H1 (cell line): ENCODE measurements at regions of chr6 and their contacts with region 1.

Region 1: DNA sequence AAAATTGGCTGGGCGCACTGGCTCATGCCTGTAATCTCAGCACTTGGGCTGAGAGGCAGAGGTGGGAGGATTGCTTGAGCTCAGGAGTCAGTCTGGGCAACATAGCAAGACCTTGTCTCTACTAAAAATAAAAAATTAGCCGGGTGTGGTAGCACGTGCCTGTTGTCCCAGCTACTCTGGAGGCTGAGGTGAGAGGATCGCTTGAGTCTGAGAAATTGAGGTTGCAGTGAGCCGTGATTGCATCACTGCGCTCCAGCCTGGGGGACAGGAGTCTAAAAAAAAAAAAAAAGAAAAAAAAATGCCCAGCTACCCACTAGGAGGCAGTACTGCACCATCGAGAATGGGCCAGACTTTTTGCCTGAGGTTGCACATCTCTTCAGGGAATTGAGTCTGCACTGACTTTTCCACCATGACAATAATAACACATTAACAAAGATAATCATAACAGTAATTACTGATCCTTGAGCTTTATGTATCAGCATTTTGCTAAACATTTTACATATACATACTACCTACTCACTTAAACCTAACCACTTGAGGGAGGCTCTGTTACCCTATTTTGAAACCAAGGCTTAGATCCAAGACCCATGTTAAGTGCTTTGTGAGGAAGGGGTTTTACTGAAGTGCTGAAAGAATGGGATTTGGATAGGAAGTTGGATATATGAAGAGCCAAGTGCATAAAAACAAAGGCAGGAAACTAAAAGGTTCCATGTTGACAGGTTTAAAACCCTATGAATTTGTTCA is 21.0 kb downstream of the SRSF3 start:
- DNase-seq: no peak
- H3K4me3 ChIP-seq: no peak overlapping the region
- H3K27ac ChIP-seq: no peak overlapping the region
- H3K4me1 ChIP-seq: peaks cover 0 to 2% (median 0%) of the 10 kb centered on the region in 4 experiments; a peak in 1 of 7 replicates
- H3K27me3 ChIP-seq: no peaks in the 10 kb centered on the region
- CTCF ChIP-seq: peak; percentile 47 to 77 (median 75)
- EP300 ChIP-seq: no peak
- POLR2A ChIP-seq: no peak
- RAD21 ChIP-seq: peak; percentile 85 to 86

Region 2: GRCh38 chr6:36285187-36285671 is 330.0 kb before region 1 on chr6:
- CTCF ChIA-PET with region 1: no interaction called
- POLR2A ChIA-PET with region 1: no interaction called
- DNase-seq: peak; percentile 19 to 79
- H3K4me3 ChIP-seq: no peak overlapping the region
- H3K27ac ChIP-seq: no peak overlapping the region
- H3K4me1 ChIP-seq: peaks cover 0 to 7% (median 3%) of the 10 kb centered on the region in 4 experiments; a peak in 5 of 7 replicates
- H3K27me3 ChIP-seq: 0 out of 7 replicates have a peak, but pooled peaks cover 0 to 3% (median 0%) of the 10 kb centered on the region in 4 experiments
- CTCF ChIP-seq: peak; percentile 37 to 42 (median 39)
- EP300 ChIP-seq: no peak
- POLR2A ChIP-seq: no peak
- RAD21 ChIP-seq: peak; percentile 50 to 66

Region 3: DNA sequence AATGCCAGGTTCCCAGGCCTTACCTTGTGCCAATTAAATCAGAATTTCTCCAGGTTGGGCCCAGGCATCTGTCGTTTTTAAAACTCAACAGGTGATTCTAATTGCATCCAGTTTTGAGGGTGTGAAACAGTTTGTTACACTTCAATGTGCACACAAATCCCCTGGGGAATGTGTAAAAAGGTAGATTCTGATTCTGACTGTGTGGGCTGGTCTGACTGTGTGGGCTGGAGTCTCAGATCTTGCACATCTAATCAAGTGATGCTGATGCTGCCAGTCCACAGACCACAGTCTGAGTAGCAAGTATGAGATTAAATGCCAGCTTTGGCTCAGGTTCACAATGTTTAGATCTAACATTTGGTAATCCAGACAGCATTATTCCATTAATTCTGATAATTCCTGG is 215.2 kb before region 1 on chr6:
- CTCF ChIA-PET with region 1: no interaction called
- POLR2A ChIA-PET with region 1: no interaction called
- DNase-seq: no peak
- H3K4me3 ChIP-seq: no peak overlapping the region
- H3K27ac ChIP-seq: no peak overlapping the region
- H3K4me1 ChIP-seq: no peaks in the 10 kb centered on the region
- H3K27me3 ChIP-seq: no peaks in the 10 kb centered on the region
- CTCF ChIP-seq: no peak
- EP300 ChIP-seq: no peak
- POLR2A ChIP-seq: no peak
- RAD21 ChIP-seq: no peak

Region 4: GRCh38 chr6:36633915-36634314 is 18.7 kb after region 1 on chr6:
- CTCF ChIA-PET with region 1: interaction called, 13 read pairs
- POLR2A ChIA-PET with region 1: interaction called, 5 read pairs
- DNase-seq: no peak
- H3K4me3 ChIP-seq: no peak overlapping the region
- H3K27ac ChIP-seq: no peak overlapping the region
- H3K4me1 ChIP-seq: peaks cover 0 to 4% (median 1%) of the 10 kb centered on the region in 4 experiments; a peak in 2 of 7 replicates
- H3K27me3 ChIP-seq: no peaks in the 10 kb centered on the region
- CTCF ChIP-seq: no peak
- EP300 ChIP-seq: no peak
- POLR2A ChIP-seq: no peak
- RAD21 ChIP-seq: no peak

Region 5: GRCh38 chr6:36724514-36725390 is 109.6 kb after region 1 on chr6:
- CTCF ChIA-PET with region 1: interaction called, 35 read pairs
- POLR2A ChIA-PET with region 1: interaction called, 7 read pairs
- DNase-seq: peak; percentile 49 to 86
- H3K4me3 ChIP-seq: no peak overlapping the region
- H3K27ac ChIP-seq: no peak overlapping the region
- H3K4me1 ChIP-seq: no peaks in the 10 kb centered on the region; a peak in 1 of 7 replicates
- H3K27me3 ChIP-seq: no peaks in the 10 kb centered on the region
- CTCF ChIP-seq: peak in 2 of 3 experiments; percentile 80; a peak in 3 of 4 replicates
- EP300 ChIP-seq: no peak
- POLR2A ChIP-seq: no peak
- RAD21 ChIP-seq: peak; percentile 83 to 84

Region 6: GRCh38 chr6:36752886-36753506 is 137.8 kb after region 1 on chr6:
- CTCF ChIA-PET with region 1: interaction called, 48 read pairs
- POLR2A ChIA-PET with region 1: interaction called, 4 read pairs
- DNase-seq: no peak
- H3K4me3 ChIP-seq: no peak overlapping the region
- H3K27ac ChIP-seq: no peak overlapping the region
- H3K4me1 ChIP-seq: peaks cover 0 to 2% (median 0%) of the 10 kb centered on the region in 4 experiments; a peak in 2 of 7 replicates
- H3K27me3 ChIP-seq: no peaks in the 10 kb centered on the region; a peak in 1 of 7 replicates
- CTCF ChIP-seq: no peak
- EP300 ChIP-seq: no peak
- POLR2A ChIP-seq: no peak
- RAD21 ChIP-seq: no peak

Region 7: DNA sequence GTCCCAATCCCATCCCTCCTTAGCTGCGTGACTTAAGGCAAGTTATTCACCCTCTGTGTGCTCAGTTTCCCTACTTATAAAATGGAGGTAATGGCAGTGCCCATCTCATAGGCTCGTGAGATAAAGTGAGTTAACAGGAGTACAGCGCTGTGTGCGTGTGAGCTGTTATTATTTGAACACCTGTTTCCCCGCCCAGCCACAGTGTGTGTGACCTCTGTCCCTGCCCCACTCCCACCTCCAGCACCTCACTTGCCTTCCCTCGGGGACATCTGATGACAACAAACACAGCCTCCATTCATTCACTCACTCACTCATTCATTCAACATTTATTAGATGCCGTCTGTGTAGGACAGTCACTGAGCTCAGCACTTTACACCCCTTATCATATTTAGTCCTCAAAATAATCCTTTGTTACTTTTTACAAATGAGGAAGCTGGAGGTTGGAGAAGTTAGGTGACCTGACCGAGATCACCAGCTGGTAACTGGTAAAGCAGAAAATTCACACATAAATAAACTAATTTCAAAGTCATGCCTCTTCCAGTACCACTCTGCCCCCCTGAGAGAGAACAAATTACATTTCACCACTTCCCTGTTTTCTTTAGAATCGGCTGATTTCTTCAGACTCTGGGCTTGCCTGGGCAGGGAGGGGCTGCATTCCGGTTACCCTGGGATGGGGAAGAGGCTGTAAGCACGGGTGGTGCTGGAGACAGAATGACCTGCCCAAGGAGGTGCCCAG is 165.4 kb after region 1 on chr6:
- CTCF ChIA-PET with region 1: interaction called, 10 read pairs
- POLR2A ChIA-PET with region 1: no interaction called
- DNase-seq: no peak
- H3K4me3 ChIP-seq: no peak overlapping the region
- H3K27ac ChIP-seq: no peak overlapping the region
- H3K4me1 ChIP-seq: peaks cover 4 to 18% (median 14%) of the 10 kb centered on the region in 4 experiments
- H3K27me3 ChIP-seq: peaks cover 0 to 4% (median 0%) of the 10 kb centered on the region in 4 experiments; a peak in 3 of 7 replicates
- CTCF ChIP-seq: no peak
- EP300 ChIP-seq: no peak
- POLR2A ChIP-seq: no peak
- RAD21 ChIP-seq: no peak